ENCODE measurements at regions of chr9 and their contacts with region 1.

Region 1: GRCh38 chr9:96232539-96233241 is 69.3 kb downstream of the HSD17B3 start:
- DNase-seq: peak; percentile 79
- H3K4me3 Mint-ChIP-seq: no peak overlapping the region
- H3K27ac Mint-ChIP-seq: no peak overlapping the region
- H3K4me1 Mint-ChIP-seq: peaks cover 6% of the 10 kb centered on the region
- H3K27me3 Mint-ChIP-seq: peaks cover 59% of the 10 kb centered on the region
- CTCF ChIP-seq: peak; percentile 84

Region 2: GRCh38 chr9:96245399-96245798 is 12.7 kb after region 1 on chr9:
- CTCF ChIA-PET with region 1: interaction called, 18 read pairs
- POLR2A ChIA-PET with region 1: no interaction called
- intact Hi-C with region 1: no loop called
- DNase-seq: no peak
- H3K4me3 Mint-ChIP-seq: no peak overlapping the region
- H3K27ac Mint-ChIP-seq: no peak overlapping the region
- H3K4me1 Mint-ChIP-seq: peaks cover 11% of the 10 kb centered on the region
- H3K27me3 Mint-ChIP-seq: peaks cover 99% of the 10 kb centered on the region
- CTCF ChIP-seq: no peak

Region 3: DNA sequence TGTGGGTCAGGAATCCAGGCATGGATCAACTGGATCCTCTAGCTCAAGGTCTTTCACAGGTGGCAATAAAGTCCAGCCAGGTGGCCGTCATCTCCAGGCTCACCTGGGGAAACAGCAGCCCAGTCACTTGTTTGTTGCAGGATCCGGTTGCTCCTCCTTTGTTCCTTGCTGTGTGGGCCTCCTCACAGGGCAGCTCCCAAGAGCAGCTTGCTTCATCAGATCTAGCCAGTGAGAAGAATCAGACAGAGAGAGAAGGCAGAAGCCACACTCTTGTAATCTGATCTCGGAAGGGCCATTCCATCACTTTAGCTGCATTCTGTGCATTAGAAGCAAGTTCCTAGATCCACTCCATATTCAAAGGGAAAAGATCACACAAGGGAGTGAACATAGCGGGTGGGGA is 72.5 kb after region 1 on chr9:
- CTCF ChIA-PET with region 1: interaction called, 11 read pairs
- POLR2A ChIA-PET with region 1: no interaction called
- intact Hi-C with region 1: no loop called
- DNase-seq: no peak
- H3K4me3 Mint-ChIP-seq: no peak overlapping the region
- H3K27ac Mint-ChIP-seq: no peak overlapping the region
- H3K4me1 Mint-ChIP-seq: no peaks in the 10 kb centered on the region
- H3K27me3 Mint-ChIP-seq: no peaks in the 10 kb centered on the region
- CTCF ChIP-seq: no peak

Region 4: GRCh38 chr9:96667361-96667728 is 434.7 kb after region 1 on chr9:
- CTCF ChIA-PET with region 1: interaction called, 12 read pairs
- POLR2A ChIA-PET with region 1: no interaction called
- intact Hi-C with region 1: loop called (anchors 5 kb)
- DNase-seq: no peak
- H3K4me3 Mint-ChIP-seq: no peak overlapping the region
- H3K27ac Mint-ChIP-seq: no peak overlapping the region
- H3K4me1 Mint-ChIP-seq: no peaks in the 10 kb centered on the region
- H3K27me3 Mint-ChIP-seq: no peaks in the 10 kb centered on the region
- CTCF ChIP-seq: no peak